Activated CD4-positive, alpha-beta memory T cell treated with anti-CD3 and anti-CD28 coated beads for 36 hours (primary cell): ENCODE measurements at regions of chr10 and their contacts with region 1.

Region 1: GRCh38 chr10:118423800-118424479 is 81.8 kb upstream of the FAM204A start:
- DNase-seq: peak; percentile 80
- H3K4me3 Mint-ChIP-seq: no peak overlapping the region
- H3K27ac Mint-ChIP-seq: no peak overlapping the region
- H3K4me1 Mint-ChIP-seq: peaks cover 3% of the 10 kb centered on the region
- H3K27me3 Mint-ChIP-seq: peaks cover 7% of the 10 kb centered on the region

Region 2: DNA sequence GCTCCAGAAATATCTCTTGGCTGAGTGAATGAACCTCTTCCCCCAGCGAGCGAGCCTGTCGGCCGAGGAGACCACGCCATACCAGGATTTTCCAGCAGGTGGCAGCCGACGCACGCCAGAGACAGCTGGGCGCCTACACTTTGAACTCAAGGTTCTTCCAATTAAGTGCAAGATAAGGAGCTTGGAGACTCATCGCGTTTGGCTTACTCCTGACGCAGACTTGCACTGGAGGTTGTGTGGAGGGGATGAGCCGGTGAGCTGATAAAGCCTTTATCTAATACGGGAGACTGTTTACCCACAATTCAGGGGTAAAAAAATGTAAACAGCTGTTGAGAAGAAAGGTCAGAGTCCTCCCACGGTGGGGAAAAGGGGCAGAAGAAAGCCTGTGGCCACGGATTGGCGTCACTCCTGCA is 927.3 kb before region 1 on chr10:
- CTCF ChIA-PET with region 1: interaction called, 6 read pairs
- POLR2A ChIA-PET with region 1: no interaction called
- intact Hi-C with region 1: loop called (anchors 5 kb)
- DNase-seq: peak; percentile 79
- H3K4me3 Mint-ChIP-seq: no peak overlapping the region
- H3K27ac Mint-ChIP-seq: no peak overlapping the region
- H3K4me1 Mint-ChIP-seq: no peaks in the 10 kb centered on the region
- H3K27me3 Mint-ChIP-seq: peaks cover 21% of the 10 kb centered on the region

Region 3: DNA sequence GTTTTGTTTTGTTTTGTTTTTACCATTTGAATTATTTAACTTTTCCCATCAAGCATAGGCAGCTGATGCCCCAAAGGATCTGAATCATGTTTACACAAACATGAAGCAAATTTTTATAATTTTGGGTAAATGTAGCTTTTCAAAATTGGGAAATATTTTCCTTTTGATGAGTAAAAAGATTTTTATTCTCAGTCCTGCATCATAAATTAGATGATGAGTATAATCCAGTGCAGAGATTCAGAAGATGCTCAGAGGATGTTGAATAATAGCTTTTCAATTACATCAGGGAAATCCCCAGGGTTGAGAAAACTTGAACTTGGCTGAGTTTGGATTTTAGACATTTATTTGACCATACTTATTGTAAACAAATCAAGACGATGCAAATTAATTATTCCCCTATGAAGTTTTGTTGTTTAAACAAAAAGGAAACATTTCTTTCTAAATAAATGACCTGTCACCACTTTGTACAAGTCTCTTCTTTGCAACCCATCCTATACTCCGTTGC is 203.5 kb before region 1 on chr10:
- CTCF ChIA-PET with region 1: no interaction called
- POLR2A ChIA-PET with region 1: no interaction called
- intact Hi-C with region 1: no loop called
- DNase-seq: no peak
- H3K4me3 Mint-ChIP-seq: no peak overlapping the region
- H3K27ac Mint-ChIP-seq: no peak overlapping the region
- H3K4me1 Mint-ChIP-seq: no peaks in the 10 kb centered on the region
- H3K27me3 Mint-ChIP-seq: peaks cover 5% of the 10 kb centered on the region